ENCODE measurements at regions of chr16 and their contacts with region 1.

Region 1: GRCh38 chr16:66650707-66651473 is 45.7 kb downstream of the CMTM4 start:
- DNase-seq: peak; percentile 84
- H3K4me3 Mint-ChIP-seq: peak overlapping the region; percentile 50
- H3K27ac Mint-ChIP-seq: peak overlapping the region; percentile 64
- H3K4me1 Mint-ChIP-seq: peaks cover 39% of the 10 kb centered on the region
- H3K27me3 Mint-ChIP-seq: no peaks in the 10 kb centered on the region
- CTCF ChIP-seq: peak; percentile 90

Region 2: GRCh38 chr16:66544016-66544757 is 106.7 kb before region 1 on chr16:
- CTCF ChIA-PET with region 1: no interaction called
- POLR2A ChIA-PET with region 1: no interaction called
- intact Hi-C with region 1: no loop called
- DNase-seq: no peak
- H3K4me3 Mint-ChIP-seq: no peak overlapping the region
- H3K27ac Mint-ChIP-seq: no peak overlapping the region
- H3K4me1 Mint-ChIP-seq: peaks cover 22% of the 10 kb centered on the region
- H3K27me3 Mint-ChIP-seq: no peaks in the 10 kb centered on the region
- CTCF ChIP-seq: no peak

Region 3: DNA sequence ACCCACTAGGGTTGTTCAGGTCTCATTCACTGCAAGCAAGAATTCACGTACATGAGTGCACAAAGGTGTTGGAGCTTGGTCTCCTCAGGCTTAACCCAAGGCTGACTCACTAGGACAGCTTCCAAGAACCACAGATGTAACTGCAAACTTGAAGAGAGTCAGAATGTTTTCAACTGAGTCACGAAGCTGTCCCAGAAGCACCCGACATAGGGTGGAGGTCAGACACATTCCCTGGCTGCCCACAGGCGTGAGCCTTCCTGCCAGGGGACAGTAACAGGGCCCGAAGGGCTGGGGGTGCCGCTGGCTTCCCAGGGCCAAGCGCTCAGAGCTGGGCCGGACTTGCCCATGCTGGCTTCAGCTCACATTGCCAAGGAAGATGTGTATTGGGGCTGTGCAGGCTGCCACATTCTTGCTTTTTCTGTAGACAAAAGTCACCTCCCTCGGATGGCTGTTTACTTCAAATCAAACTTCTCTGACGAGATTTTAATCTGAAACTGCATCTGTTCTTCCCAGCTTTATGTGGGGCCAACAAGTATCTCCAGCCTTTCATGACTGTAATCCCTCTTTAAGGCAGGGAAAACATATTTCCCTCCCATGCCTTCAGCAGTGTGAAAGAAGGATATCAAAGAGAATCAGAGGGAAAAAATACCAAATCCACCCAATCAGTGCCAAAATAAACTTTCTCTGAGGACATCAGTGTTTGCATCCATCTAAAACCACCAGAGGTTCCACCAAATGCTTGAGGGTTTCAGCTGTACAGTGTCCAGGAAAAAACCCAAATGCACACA is 32.1 kb before region 1 on chr16:
- CTCF ChIA-PET with region 1: interaction called, 19 read pairs
- POLR2A ChIA-PET with region 1: interaction called, 8 read pairs
- intact Hi-C with region 1: no loop called
- DNase-seq: peak; percentile 96
- H3K4me3 Mint-ChIP-seq: peak overlapping the region; percentile 47
- H3K27ac Mint-ChIP-seq: peak overlapping the region; percentile 75
- H3K4me1 Mint-ChIP-seq: peaks cover 32% of the 10 kb centered on the region
- H3K27me3 Mint-ChIP-seq: no peaks in the 10 kb centered on the region
- CTCF ChIP-seq: no peak

Region 4: GRCh38 chr16:66677179-66677578 is 26.3 kb after region 1 on chr16:
- CTCF ChIA-PET with region 1: interaction called, 16 read pairs
- POLR2A ChIA-PET with region 1: no interaction called
- intact Hi-C with region 1: no loop called
- DNase-seq: no peak
- H3K4me3 Mint-ChIP-seq: no peak overlapping the region
- H3K27ac Mint-ChIP-seq: no peak overlapping the region
- H3K4me1 Mint-ChIP-seq: peaks cover 7% of the 10 kb centered on the region
- H3K27me3 Mint-ChIP-seq: no peaks in the 10 kb centered on the region
- CTCF ChIP-seq: no peak

Region 5: DNA sequence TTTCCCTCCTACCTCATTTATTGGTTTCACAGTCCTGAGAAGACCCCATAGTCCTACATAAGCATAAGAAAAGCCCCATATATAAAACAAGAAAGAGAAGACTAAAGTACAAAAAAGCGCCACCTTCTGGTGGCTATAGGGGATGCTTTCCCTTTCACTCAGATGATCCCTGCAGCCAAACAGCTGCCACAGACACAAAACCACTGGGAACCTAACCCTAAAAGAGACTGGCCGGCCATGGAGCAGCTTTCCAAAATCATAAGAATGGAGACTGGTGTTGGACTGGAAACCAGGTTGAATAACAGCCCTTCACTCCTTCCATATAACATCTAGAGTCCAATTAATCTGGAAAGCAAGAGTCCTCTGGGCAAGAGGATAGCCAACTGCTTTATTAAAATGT is 89.1 kb after region 1 on chr16:
- CTCF ChIA-PET with region 1: interaction called, 13 read pairs
- POLR2A ChIA-PET with region 1: interaction called, 4 read pairs
- intact Hi-C with region 1: no loop called
- DNase-seq: peak; percentile 56
- H3K4me3 Mint-ChIP-seq: no peak overlapping the region
- H3K27ac Mint-ChIP-seq: peak overlapping the region; percentile 66
- H3K4me1 Mint-ChIP-seq: peaks cover 32% of the 10 kb centered on the region
- H3K27me3 Mint-ChIP-seq: no peaks in the 10 kb centered on the region
- CTCF ChIP-seq: peak; percentile 58